Natural killer cell (primary cell): ENCODE measurements at regions of chr6 and their contacts with region 1.

Region 1: DNA sequence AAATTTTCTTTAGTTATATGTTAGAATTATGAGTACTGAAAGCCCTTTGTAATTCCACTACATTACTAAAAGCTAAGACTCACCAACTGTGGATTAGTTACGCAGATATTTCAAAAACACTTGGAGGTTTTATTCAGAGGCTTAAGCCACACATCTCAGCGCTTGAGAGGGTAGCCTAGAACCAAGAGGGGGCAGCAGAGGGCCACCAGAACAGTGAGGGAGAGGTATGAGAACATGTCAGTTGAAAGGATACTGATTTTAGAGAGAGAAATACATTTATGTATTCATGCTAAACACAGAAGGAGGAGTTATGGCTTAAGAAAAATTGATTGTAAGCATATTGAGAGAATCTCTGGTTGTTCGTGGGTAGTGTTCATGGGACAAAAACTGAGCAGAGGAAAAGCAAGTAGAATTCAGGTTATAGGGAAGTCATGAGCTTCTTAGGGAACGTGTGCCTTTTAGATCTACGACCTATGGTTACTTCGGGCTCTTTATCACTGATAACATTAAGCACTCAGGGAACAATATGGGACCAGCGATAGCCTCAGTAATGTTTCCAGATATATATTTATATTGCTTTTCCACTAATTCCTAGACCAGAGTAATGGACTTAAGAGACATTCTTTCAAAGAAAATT is 20.4 kb upstream of the SERINC1 start:
- DNase-seq: peak; percentile 42 to 79
- ATAC-seq: peak; percentile 93 to 99 (median 99)
- H3K4me3 ChIP-seq: no peak overlapping the region
- H3K4me3 Mint-ChIP-seq: no peak overlapping the region
- H3K27ac ChIP-seq: no peak overlapping the region
- H3K27ac Mint-ChIP-seq: no peak overlapping the region
- H3K4me1 ChIP-seq: peaks cover 9% of the 10 kb centered on the region
- H3K4me1 Mint-ChIP-seq: peaks cover 0 to 12% of the 10 kb centered on the region in 2 donors
- H3K27me3 ChIP-seq: no peaks in the 10 kb centered on the region
- H3K27me3 Mint-ChIP-seq: peaks cover 1 to 3% of the 10 kb centered on the region in 2 donors
- CTCF ChIP-seq: peak; percentile 88

Region 2: GRCh38 chr6:122381497-122382265 is 110.4 kb before region 1 on chr6:
- intact Hi-C with region 1: loop called (anchors 2 kb)
- DNase-seq: peak in 1 of 2 donors; percentile 84
- ATAC-seq: peak; percentile 79 to 95 (median 92)
- H3K4me3 ChIP-seq: no peak overlapping the region
- H3K4me3 Mint-ChIP-seq: no peak overlapping the region
- H3K27ac ChIP-seq: no peak overlapping the region
- H3K27ac Mint-ChIP-seq: no peak overlapping the region
- H3K4me1 ChIP-seq: no peaks in the 10 kb centered on the region
- H3K4me1 Mint-ChIP-seq: no peaks in the 10 kb centered on the region
- H3K27me3 ChIP-seq: peaks cover 2% of the 10 kb centered on the region
- H3K27me3 Mint-ChIP-seq: peaks cover 7 to 18% of the 10 kb centered on the region in 2 donors
- CTCF ChIP-seq: peak; percentile 71

Region 3: GRCh38 chr6:122530440-122531046 is 38.5 kb after region 1 on chr6:
- intact Hi-C with region 1: loop called (anchors 1 kb)
- DNase-seq: peak; percentile 19 to 80
- ATAC-seq: peak; percentile 78 to 94 (median 89)
- H3K4me3 ChIP-seq: no peak overlapping the region
- H3K4me3 Mint-ChIP-seq: no peak overlapping the region
- H3K27ac ChIP-seq: no peak overlapping the region
- H3K27ac Mint-ChIP-seq: no peak overlapping the region
- H3K4me1 ChIP-seq: no peaks in the 10 kb centered on the region
- H3K4me1 Mint-ChIP-seq: no peaks in the 10 kb centered on the region
- H3K27me3 ChIP-seq: peaks cover 12% of the 10 kb centered on the region
- H3K27me3 Mint-ChIP-seq: peaks cover 9 to 47% of the 10 kb centered on the region in 2 donors
- CTCF ChIP-seq: peak; percentile 82

Region 4: DNA sequence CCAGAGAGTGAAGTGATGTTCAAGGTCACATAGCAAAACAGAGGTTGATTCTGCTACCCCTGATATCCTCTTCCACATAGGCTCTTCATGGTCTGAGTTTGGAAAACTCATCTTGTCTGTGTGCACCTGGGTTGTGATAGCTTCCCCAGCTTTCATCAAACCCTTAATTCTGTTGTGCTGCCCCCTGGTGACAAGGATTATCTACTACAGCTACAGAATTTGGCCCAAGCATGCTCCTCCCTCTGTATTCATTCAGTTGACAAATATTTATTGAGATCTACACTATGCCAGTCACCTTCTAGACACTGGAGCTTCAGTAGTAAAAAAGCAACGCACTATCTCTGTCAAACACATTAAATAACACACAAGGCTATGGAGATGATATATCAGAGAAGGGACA is 347.4 kb after region 1 on chr6:
- intact Hi-C with region 1: loop called (anchors 1 kb)
- DNase-seq: peak; percentile 25 to 67
- ATAC-seq: peak; percentile 58 to 71 (median 62)
- H3K4me3 ChIP-seq: no peak overlapping the region
- H3K4me3 Mint-ChIP-seq: no peak overlapping the region
- H3K27ac ChIP-seq: no peak overlapping the region
- H3K27ac Mint-ChIP-seq: no peak overlapping the region
- H3K4me1 ChIP-seq: no peaks in the 10 kb centered on the region
- H3K4me1 Mint-ChIP-seq: no peaks in the 10 kb centered on the region
- H3K27me3 ChIP-seq: no peaks in the 10 kb centered on the region
- H3K27me3 Mint-ChIP-seq: peaks cover 0 to 15% of the 10 kb centered on the region in 2 donors
- CTCF ChIP-seq: peak; percentile 46

Region 5: GRCh38 chr6:123316733-123317323 is 824.8 kb after region 1 on chr6:
- intact Hi-C with region 1: loop called (anchors 5 kb)
- DNase-seq: peak in 1 of 2 donors; percentile 8
- ATAC-seq: no peak
- H3K4me3 ChIP-seq: no peak overlapping the region
- H3K4me3 Mint-ChIP-seq: no peak overlapping the region
- H3K27ac ChIP-seq: no peak overlapping the region
- H3K27ac Mint-ChIP-seq: no peak overlapping the region
- H3K4me1 ChIP-seq: no peaks in the 10 kb centered on the region
- H3K4me1 Mint-ChIP-seq: no peaks in the 10 kb centered on the region
- H3K27me3 ChIP-seq: no peaks in the 10 kb centered on the region
- H3K27me3 Mint-ChIP-seq: no peaks in the 10 kb centered on the region
- CTCF ChIP-seq: peak; percentile 53